ENCODE measurements at regions of chr3 and their contacts with region 1.

Region 1: DNA sequence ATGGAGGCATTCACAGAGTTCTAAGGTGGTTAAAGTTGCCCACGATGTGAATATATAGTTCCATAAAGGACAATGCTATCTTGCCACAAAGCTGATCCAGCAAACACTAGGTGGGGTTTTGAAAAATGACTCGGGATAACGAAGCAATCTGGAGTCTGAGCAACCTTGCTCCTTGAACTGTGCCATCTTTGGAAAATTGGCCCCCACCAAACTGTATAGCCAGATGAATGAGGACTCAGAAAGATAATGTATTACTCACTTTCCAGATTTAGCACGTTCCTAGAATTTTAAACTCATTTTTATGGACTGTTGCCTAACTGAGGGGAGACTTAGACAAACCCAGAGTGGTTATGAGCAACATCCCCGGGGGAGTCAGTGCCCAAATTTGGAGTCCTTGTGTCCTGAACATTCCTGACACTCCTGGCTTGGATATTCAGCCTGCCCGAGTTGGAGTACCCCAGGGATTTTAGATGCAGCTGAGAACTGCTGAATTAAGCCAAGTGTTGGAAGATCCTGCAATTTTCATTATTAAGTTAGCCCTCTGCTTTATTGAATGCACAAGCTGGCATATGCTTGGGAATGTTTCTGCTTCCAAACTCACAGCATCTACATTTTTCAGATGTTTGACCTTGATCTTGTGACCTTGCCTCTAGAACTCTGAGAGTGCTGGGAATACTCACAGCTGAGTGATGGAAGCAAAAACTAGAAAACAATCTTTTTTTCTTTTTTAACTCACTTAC is 8.8 kb upstream of the MAGI1 start:
- DNase-seq: no peak
- H3K4me3 ChIP-seq: no peak overlapping the region
- H3K27ac ChIP-seq: peak overlapping the region in 3 of 4 donors; percentile 1 to 41 (median 14)
- H3K4me1 ChIP-seq: peaks cover 6 to 10% (median 8%) of the 10 kb centered on the region in 4 donors
- H3K27me3 ChIP-seq: no peaks in the 10 kb centered on the region
- CTCF ChIP-seq: peak in 3 of 5 experiments; percentile 4 to 23 (median 12)
- EP300 ChIP-seq: no peak
- POLR2A ChIP-seq: no peak

Region 2: GRCh38 chr3:65785065-65785645 is 262.3 kb before region 1 on chr3:
- in situ Hi-C with region 1: no loop called
- intact Hi-C with region 1: loop called (anchors 10 kb)
- DNase-seq: no peak
- H3K4me3 ChIP-seq: no peak overlapping the region
- H3K27ac ChIP-seq: no peak overlapping the region
- H3K4me1 ChIP-seq: peaks cover 0 to 10% (median 4%) of the 10 kb centered on the region in 4 donors
- H3K27me3 ChIP-seq: no peaks in the 10 kb centered on the region
- CTCF ChIP-seq: peak; percentile 60 to 76 (median 72)
- EP300 ChIP-seq: no peak
- POLR2A ChIP-seq: no peak